ENCODE measurements at regions of chr18 and their contacts with region 1.

Region 1: DNA sequence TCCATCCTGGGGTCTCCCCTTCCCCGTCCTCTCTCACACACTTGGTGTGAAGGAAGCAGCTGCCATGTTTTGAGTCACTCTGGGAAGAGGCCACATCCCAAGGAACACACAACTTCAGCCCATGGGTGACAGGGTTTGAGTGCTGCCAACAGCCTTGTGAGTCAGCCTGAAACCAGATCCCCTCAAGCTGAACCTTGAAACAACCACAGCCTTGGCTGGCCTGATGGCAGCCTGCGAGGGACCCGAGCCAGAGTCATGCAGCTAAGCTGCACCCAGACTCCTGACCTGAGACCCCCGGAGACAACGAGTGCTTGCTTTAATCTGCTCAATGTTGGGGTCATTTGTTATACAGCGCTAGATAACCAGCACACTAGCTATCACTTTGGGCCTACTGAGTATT is 19.3 kb upstream of the MC2R start:
- ATAC-seq: no peak
- H3K4me3 ChIP-seq: no peak overlapping the region
- H3K27ac ChIP-seq: no peak overlapping the region
- H3K4me1 ChIP-seq: no peaks in the 10 kb centered on the region

Region 2: GRCh38 chr18:13513021-13513420 is 421.7 kb before region 1 on chr18:
- in situ Hi-C with region 1: no loop called
- ATAC-seq: peak in 5 of 8 experiments; percentile 57 to 85 (median 65)
- H3K4me3 ChIP-seq: no peak overlapping the region
- H3K27ac ChIP-seq: no peak overlapping the region
- H3K4me1 ChIP-seq: no peaks in the 10 kb centered on the region

Region 3: DNA sequence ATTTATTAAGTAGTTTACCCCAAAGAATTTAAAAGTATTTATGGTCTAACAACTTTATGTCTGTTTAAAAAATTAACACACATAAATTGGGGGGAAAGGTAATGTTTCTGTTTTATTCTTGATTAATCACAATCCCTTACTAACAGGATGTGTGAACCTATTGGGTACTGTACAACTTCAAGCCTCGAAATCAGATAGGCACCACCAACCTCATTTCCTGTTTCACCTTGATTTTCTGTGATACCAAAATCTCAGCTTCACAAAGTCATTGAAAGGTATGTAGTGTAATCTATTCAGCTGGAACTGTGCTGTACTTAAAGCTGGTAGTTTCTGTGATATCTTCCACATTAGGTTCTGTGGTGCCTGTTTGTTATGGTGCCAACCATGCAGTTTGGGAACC is 204.2 kb before region 1 on chr18:
- in situ Hi-C with region 1: no loop called
- ATAC-seq: no peak
- H3K4me3 ChIP-seq: no peak overlapping the region
- H3K27ac ChIP-seq: no peak overlapping the region
- H3K4me1 ChIP-seq: peaks cover under 1 to 8% of the 10 kb centered on the region in 2 donors

Region 4: DNA sequence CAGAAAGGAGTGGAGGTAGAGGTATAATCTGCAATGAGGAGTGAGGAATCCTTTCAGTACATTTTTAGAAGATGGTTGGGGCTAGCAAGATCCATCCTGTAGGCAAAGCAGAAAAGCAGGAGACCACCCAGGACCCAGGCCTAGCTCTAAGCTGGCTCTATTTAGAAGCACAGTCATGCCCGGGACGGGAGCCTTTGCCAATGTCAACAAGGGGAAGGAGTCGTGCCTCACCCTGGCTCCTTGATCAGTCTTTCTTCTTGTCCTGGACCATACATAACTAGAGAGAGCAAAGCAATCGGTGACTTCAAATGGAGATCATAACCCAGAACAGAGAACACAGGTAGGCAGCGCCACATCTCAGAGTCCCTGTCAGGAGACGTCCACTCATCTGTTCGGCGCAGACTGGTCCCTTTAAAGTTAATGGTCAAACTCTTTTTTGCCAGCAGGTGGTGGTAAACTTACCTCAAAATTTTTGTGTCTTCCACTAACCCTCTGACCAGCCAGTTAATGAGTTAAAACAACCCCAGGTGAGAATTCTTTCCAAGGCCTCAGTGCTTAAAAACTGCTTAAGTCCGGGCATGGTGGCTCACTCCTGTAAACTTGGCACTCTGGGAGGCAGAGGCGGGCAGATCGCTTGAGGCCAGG is 102.7 kb before region 1 on chr18:
- in situ Hi-C with region 1: loop called in 1 of 9 experiments (anchors 25 kb)
- ATAC-seq: no peak
- H3K4me3 ChIP-seq: no peak overlapping the region
- H3K27ac ChIP-seq: no peak overlapping the region
- H3K4me1 ChIP-seq: no peaks in the 10 kb centered on the region

Measured in motor neuron (in vitro differentiated cells).